Naive thymus-derived CD8-positive, alpha-beta T cell (primary cell): ENCODE measurements at regions of chr4 and their contacts with region 1.

Region 1: GRCh38 chr4:6716018-6716911 is at the start of gene BLOC1S4:
- DNase-seq: peak; percentile 85 to 95 (median 90)
- ATAC-seq: peak; percentile 86 to 89
- H3K4me3 Mint-ChIP-seq: peak within 1 kb of the TSS; percentile 84 to 98 (median 94)
- H3K27ac Mint-ChIP-seq: peak within 1 kb of the TSS; percentile 92 to 99 (median 97)
- H3K4me1 Mint-ChIP-seq: peaks cover 15 to 45% (median 35%) of the 10 kb centered on the region in 4 donors
- H3K27me3 Mint-ChIP-seq: peaks cover 0 to 2% (median 0%) of the 10 kb centered on the region in 5 donors
- polyA plus RNA-seq, gene BLOC1S4: 65.8 to 81.6 (median 75.4) TPM

Region 2: GRCh38 chr4:6658597-6659075 is 57.6 kb before region 1 on chr4:
- POLR2A ChIA-PET with region 1: interaction called, 14 read pairs
- DNase-seq: peak; percentile 37 to 75 (median 54)
- ATAC-seq: peak; percentile 91 to 93
- H3K4me3 Mint-ChIP-seq: peak overlapping the region; percentile 68 to 83 (median 76)
- H3K27ac Mint-ChIP-seq: peak overlapping the region in 5 of 10 donors; percentile 19 to 78 (median 57)
- H3K4me1 Mint-ChIP-seq: peaks cover 1 to 16% (median 13%) of the 10 kb centered on the region in 4 donors
- H3K27me3 Mint-ChIP-seq: peaks cover 0 to 33% (median 5%) of the 10 kb centered on the region in 5 donors

Region 3: GRCh38 chr4:6681187-6681586 is 35.1 kb before region 1 on chr4:
- POLR2A ChIA-PET with region 1: interaction called, 437 read pairs
- DNase-seq: no peak
- ATAC-seq: no peak
- H3K4me3 Mint-ChIP-seq: no peak overlapping the region
- H3K27ac Mint-ChIP-seq: peak overlapping the region in 5 of 10 donors; percentile 38 to 83 (median 63)
- H3K4me1 Mint-ChIP-seq: peaks cover 18 to 58% (median 38%) of the 10 kb centered on the region in 4 donors
- H3K27me3 Mint-ChIP-seq: no peaks in the 10 kb centered on the region

Region 4: GRCh38 chr4:6695660-6696630 is 20.3 kb before region 1 on chr4:
- POLR2A ChIA-PET with region 1: interaction called, 81 read pairs
- DNase-seq: peak in 9 of 10 donors; percentile 27 to 81 (median 55)
- ATAC-seq: peak; percentile 86 to 90
- H3K4me3 Mint-ChIP-seq: peak overlapping the region; percentile 40 to 85 (median 74)
- H3K27ac Mint-ChIP-seq: peak overlapping the region; percentile 90 to 98 (median 94)
- H3K4me1 Mint-ChIP-seq: peaks cover 49 to 87% (median 82%) of the 10 kb centered on the region in 4 donors
- H3K27me3 Mint-ChIP-seq: no peaks in the 10 kb centered on the region

Region 5: DNA sequence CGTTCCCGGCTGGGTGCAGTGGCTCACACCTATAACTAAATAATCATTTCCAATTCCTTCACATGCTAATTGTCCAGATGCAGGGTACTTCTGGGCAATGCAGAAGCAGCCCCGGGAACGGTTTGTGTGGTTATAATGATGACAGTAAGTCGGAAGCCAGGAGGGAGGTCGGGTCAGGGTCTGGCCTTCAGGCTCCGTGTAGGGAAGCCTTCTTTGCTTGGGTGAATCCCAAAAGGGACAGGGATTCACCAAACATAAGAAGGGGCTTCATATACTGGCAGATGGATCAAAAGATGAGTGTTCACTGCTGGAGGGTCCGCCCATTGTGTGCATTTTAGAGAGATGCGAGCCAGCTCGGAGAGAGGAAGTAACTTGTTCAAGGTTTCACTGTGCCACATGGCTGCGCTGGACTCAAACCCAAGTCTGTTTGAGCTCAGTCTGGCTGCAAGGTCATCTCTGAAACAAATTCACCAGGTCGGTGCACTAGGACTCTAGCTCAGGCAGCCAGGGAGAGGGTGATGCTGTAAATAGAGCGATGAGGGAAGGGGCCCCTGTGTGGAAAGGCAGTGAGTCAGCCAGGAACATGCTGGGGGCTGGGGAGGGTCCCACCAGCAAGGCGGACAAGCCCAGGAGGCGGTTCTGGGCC is 61.5 kb after region 1 on chr4:
- POLR2A ChIA-PET with region 1: interaction called, 31 read pairs
- DNase-seq: peak in 3 of 10 donors; percentile 5 to 28 (median 22)
- ATAC-seq: no peak
- H3K4me3 Mint-ChIP-seq: peak overlapping the region; percentile 58 to 90 (median 76)
- H3K27ac Mint-ChIP-seq: peak overlapping the region; percentile 92 to 99 (median 96)
- H3K4me1 Mint-ChIP-seq: peaks cover 39 to 72% (median 67%) of the 10 kb centered on the region in 4 donors
- H3K27me3 Mint-ChIP-seq: no peaks in the 10 kb centered on the region

Region 6: DNA sequence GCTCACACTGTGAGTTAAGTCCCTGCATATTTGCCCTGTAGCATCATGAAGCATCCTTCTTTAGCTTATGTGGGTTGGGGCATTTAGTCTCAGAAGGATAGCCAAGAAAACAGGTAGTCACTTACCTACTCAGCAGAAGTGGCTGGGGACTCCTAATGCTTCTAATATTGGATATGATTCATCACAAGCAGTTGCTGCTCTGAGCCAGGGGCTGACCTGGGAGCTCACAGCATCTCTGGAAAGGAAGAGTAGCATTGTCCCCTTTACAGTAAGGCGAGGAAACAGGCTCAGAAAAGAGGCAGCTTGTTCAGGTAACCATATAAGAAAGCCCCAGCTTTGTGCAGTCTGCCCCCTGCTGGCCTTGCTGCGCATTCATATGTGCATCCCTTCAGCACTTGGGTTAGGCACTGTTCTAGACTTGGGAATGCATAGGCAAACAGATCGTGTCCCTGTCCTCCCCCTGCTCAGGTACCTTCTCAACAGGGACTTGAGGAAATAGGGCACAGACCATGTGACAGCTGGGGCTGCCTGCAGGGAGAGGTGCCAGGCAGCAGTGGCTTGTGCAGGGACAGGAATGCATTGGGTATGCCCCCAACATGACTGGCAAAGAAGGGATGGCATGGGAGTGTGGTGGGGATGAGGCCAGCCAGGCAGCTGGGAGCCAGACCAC is 157.7 kb after region 1 on chr4:
- POLR2A ChIA-PET with region 1: interaction called, 46 read pairs
- DNase-seq: peak; percentile 56 to 90 (median 76)
- ATAC-seq: peak; percentile 93 to 97
- H3K4me3 Mint-ChIP-seq: no peak overlapping the region
- H3K27ac Mint-ChIP-seq: peak overlapping the region in 5 of 10 donors; percentile 17 to 69 (median 60)
- H3K4me1 Mint-ChIP-seq: peaks cover 0 to 22% (median 7%) of the 10 kb centered on the region in 4 donors
- H3K27me3 Mint-ChIP-seq: no peaks in the 10 kb centered on the region

Region 7: GRCh38 chr4:7067452-7068278 is 351.4 kb after region 1 on chr4 and contains the start of gene GRPEL1:
- POLR2A ChIA-PET with region 1: interaction called, 12 read pairs
- DNase-seq: peak; percentile 37 to 100 (median 100)
- ATAC-seq: peak; percentile 91 to 92
- H3K4me3 Mint-ChIP-seq: peak within 1 kb of the TSS; percentile 85 to 98 (median 96)
- H3K27ac Mint-ChIP-seq: peak within 1 kb of the TSS; percentile 91 to 98 (median 96)
- H3K4me1 Mint-ChIP-seq: peaks cover 18 to 59% (median 52%) of the 10 kb centered on the region in 4 donors
- H3K27me3 Mint-ChIP-seq: peaks cover 0 to 3% (median 0%) of the 10 kb centered on the region in 5 donors
- polyA plus RNA-seq, gene GRPEL1: 31.4 to 47.6 (median 36.3) TPM